Right ventricle myocardium inferior (tissue), 1 donor: ENCODE measurements at regions of chr4 and their contacts with region 1.

Region 1: DNA sequence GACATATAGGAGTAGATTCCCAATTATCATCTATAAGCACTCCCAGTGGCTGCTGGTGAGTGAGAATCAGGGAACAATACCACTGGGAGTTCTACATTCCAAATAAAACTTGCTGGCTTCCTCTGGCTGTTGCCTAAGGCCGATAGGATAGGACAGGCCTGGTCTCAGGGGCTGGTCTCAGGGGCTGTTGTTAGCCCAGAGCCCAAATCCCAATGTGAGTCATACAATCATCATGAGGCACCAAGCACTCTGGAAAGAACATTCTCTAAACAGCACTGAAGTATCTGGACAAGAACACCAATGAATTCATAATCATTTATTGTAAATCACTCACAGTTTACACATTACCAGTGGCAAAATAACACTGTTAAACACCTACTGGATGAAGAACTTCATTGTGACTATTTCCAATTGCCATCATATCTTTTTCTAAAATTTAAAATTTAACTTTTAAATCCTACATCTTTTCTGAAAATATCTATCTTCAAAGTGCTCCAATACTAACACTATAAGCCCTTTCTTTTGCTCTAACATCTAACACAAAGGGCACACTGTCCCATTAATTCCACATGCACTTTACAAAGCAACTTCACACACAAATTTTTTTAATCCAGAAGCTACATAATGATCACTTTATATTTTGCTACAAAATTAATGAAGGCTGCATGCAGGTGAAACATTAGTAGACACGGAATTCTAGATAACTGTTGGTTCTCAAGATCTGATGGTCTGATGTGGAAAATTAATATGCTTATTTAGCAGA is 67.6 kb upstream of the TMEM150C start:
- DNase-seq: no peak
- ATAC-seq: peak; percentile 34

Region 2: GRCh38 chr4:82694046-82694445 is 64.6 kb after region 1 on chr4:
- intact Hi-C with region 1: loop called (anchors 10 kb)
- DNase-seq: no peak
- ATAC-seq: no peak